Esophagus muscularis mucosa (tissue), 4 donors: ENCODE measurements at regions of chr6 and their contacts with region 1.

Region 1: DNA sequence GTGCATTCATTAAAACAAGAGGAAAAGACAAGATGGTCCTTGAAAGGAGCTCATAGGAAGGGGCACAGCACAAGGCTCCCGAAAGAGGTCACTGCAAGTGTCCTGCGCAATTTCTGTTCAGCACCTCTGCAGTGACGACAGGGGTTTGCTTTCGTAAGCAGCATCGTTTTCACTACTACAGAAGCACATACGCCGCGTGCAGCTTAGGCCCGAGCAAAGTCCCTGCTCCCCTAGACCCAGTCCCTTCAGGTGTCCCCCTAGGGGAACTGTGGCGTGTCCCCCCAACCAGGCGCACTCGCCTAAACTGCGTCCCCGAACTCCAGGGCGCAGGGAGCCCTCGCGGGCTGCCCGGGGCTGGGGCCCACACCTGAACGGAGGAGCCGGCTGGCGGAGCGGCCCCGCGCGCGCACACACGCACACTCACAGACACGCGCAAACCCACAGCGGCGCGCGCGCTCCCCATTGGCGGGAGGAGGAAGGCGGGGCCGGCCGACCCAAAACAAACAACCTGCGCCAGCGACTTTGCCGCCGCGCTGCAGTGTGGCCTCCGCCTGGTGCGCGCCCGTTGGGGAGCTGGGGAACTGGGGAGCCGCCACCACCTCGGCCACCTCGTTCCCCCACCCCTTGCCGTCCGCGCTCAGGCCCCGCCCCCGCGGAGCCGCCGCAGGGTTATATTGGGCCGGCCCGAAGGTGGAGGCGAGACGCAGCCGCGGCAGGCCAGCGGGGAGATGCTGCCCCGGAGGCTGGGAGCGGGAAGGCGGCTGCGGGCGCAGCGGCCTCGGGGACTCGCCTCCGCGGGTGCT is at the start of gene FOXQ1:
- DNase-seq: no peak
- H3K4me3 ChIP-seq: peak within 1 kb of the TSS; percentile 61 to 73 (median 64)
- H3K27ac ChIP-seq: peak within 1 kb of the TSS; percentile 85 to 89 (median 86)
- H3K4me1 ChIP-seq: peaks cover 21 to 55% (median 51%) of the 10 kb centered on the region in 4 donors
- H3K27me3 ChIP-seq: peaks cover 0 to 34% (median 0%) of the 10 kb centered on the region in 4 donors
- CTCF ChIP-seq: no peak
- EP300 ChIP-seq: no peak
- POLR2A ChIP-seq: no peak
- total RNA-seq, gene FOXQ1: 2.5 to 4.4 (median 2.9) TPM

Region 2: GRCh38 chr6:804771-805170 is 506.8 kb before region 1 on chr6:
- intact Hi-C with region 1: loop called (anchors 10 kb)
- DNase-seq: peak; percentile 47
- H3K4me3 ChIP-seq: no peak overlapping the region
- H3K27ac ChIP-seq: no peak overlapping the region
- H3K4me1 ChIP-seq: no peaks in the 10 kb centered on the region
- H3K27me3 ChIP-seq: no peaks in the 10 kb centered on the region
- CTCF ChIP-seq: no peak
- EP300 ChIP-seq: no peak
- POLR2A ChIP-seq: no peak

Region 3: GRCh38 chr6:1381481-1382330 is 70.1 kb after region 1 on chr6:
- intact Hi-C with region 1: loop called (anchors 5 kb)
- DNase-seq: no peak
- H3K4me3 ChIP-seq: peak overlapping the region; percentile 60 to 86 (median 74)
- H3K27ac ChIP-seq: peak overlapping the region; percentile 90 to 97 (median 94)
- H3K4me1 ChIP-seq: peaks cover 45 to 90% (median 83%) of the 10 kb centered on the region in 4 donors
- H3K27me3 ChIP-seq: peaks cover 0 to 78% (median 8%) of the 10 kb centered on the region in 4 donors
- CTCF ChIP-seq: peak; percentile 90 to 99 (median 97)
- EP300 ChIP-seq: no peak
- POLR2A ChIP-seq: no peak

Region 4: GRCh38 chr6:2225422-2226392 is 914.1 kb after region 1 on chr6:
- intact Hi-C with region 1: no loop called
- DNase-seq: no peak
- H3K4me3 ChIP-seq: no peak overlapping the region
- H3K27ac ChIP-seq: no peak overlapping the region
- H3K4me1 ChIP-seq: peaks cover 0 to 5% (median 0%) of the 10 kb centered on the region in 4 donors
- H3K27me3 ChIP-seq: no peaks in the 10 kb centered on the region
- CTCF ChIP-seq: no peak
- EP300 ChIP-seq: no peak
- POLR2A ChIP-seq: no peak